H1 (cell line): ENCODE measurements at regions of chrX and their contacts with region 1.

Region 1: GRCh38 chrX:44951572-44952067 is 78.6 kb downstream of the KDM6A start:
- DNase-seq: no peak
- H3K4me3 ChIP-seq: peak overlapping the region; percentile 42 to 83 (median 54)
- H3K27ac ChIP-seq: peak overlapping the region; percentile 89
- H3K4me1 ChIP-seq: peaks cover 0 to 3% (median 2%) of the 10 kb centered on the region in 4 experiments; a peak in 1 of 7 replicates
- H3K27me3 ChIP-seq: no peaks in the 10 kb centered on the region
- CTCF ChIP-seq: no peak
- EP300 ChIP-seq: no peak
- POLR2A ChIP-seq: peak; percentile 33 to 63
- RAD21 ChIP-seq: no peak

Region 2: GRCh38 chrX:44843318-44843702 is 108.3 kb before region 1 on chrX:
- CTCF ChIA-PET with region 1: no interaction called
- POLR2A ChIA-PET with region 1: no interaction called
- DNase-seq: no peak
- H3K4me3 ChIP-seq: no peak overlapping the region
- H3K27ac ChIP-seq: no peak overlapping the region
- H3K4me1 ChIP-seq: no peaks in the 10 kb centered on the region
- H3K27me3 ChIP-seq: no peaks in the 10 kb centered on the region
- CTCF ChIP-seq: no peak
- EP300 ChIP-seq: no peak
- POLR2A ChIP-seq: no peak
- RAD21 ChIP-seq: no peak

Region 3: GRCh38 chrX:44873415-44874276 is 78.0 kb before region 1 on chrX:
- CTCF ChIA-PET with region 1: no interaction called
- POLR2A ChIA-PET with region 1: interaction called, 11 read pairs
- DNase-seq: peak in 1 of 2 experiments; percentile 46
- H3K4me3 ChIP-seq: peak overlapping the region; percentile 76 to 94 (median 83)
- H3K27ac ChIP-seq: peak overlapping the region; percentile 77; the same call in 1 of the 2 replicates
- H3K4me1 ChIP-seq: peaks cover 0 to 3% (median 1%) of the 10 kb centered on the region in 4 experiments; a peak in 2 of 7 replicates
- H3K27me3 ChIP-seq: no peaks in the 10 kb centered on the region
- CTCF ChIP-seq: no peak
- EP300 ChIP-seq: no peak
- POLR2A ChIP-seq: no peak
- RAD21 ChIP-seq: no peak

Region 4: DNA sequence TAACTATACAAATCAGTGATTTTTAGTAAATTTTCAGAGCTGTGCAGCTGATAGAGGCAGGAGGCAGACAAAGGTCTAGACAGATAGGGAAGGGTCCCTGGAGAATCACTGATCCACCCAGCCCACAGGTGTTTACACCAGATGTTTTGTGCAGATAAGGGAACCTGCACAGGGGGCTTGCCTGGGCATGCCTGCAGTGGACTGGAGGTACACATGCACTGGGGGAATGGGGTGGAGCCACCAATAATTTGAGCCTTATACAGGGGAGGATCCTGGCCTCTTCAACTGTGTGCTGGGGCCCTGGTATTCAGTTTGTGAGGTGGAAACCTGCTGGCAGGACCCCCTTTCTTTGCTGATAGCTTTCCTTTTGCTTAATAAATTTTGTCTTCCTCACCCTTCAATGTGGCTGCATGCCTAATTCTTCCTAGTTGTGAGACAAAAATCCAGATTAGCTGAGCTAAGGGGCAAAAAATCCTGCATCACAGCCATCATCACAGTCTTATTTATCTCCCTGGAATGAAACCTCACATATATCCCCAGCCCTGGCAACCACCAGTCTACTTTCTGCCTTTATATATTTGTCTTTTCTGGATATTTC is 24.1 kb after region 1 on chrX:
- CTCF ChIA-PET with region 1: no interaction called
- POLR2A ChIA-PET with region 1: no interaction called
- DNase-seq: no peak
- H3K4me3 ChIP-seq: no peak overlapping the region
- H3K27ac ChIP-seq: no peak overlapping the region; the same call in 1 of the 2 replicates
- H3K4me1 ChIP-seq: no peaks in the 10 kb centered on the region
- H3K27me3 ChIP-seq: no peaks in the 10 kb centered on the region
- CTCF ChIP-seq: no peak
- EP300 ChIP-seq: no peak
- POLR2A ChIP-seq: no peak
- RAD21 ChIP-seq: no peak

Region 5: DNA sequence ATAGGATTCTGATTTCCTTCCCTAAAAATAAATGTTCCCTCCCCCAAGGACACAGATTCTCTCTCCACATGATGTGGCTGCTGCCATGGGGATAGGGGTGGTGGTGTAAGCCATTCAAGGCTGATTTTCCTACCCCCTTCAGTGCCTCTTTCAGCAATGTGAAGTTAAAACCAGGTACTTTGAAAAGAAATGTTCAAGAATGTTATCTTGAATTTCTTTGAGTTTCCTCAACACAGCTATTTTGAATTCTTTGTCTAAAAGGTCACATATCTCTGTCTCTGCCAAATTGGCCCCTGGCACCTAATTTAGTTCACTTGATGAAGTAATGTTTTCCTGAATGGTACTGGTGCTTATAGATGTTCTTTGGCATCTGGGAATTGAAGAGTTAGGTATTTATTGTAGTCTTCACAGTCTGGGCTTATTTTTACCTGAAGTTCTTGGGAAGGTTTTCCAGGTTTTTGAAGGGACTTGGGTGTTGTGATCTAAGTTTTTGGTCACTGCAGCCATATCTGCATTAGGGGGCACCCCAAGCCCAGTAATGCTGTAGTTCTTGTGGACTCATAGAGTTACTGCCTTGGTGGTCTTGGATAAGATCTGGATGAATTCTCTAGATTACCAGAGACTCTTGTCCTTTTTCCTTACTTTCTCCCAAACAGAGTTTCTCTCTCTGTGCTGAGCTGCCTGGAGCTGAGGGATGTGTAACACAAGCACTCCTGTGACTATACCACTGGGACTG is 256.7 kb after region 1 on chrX:
- CTCF ChIA-PET with region 1: no interaction called
- POLR2A ChIA-PET with region 1: no interaction called
- DNase-seq: no peak
- H3K4me3 ChIP-seq: no peak overlapping the region
- H3K27ac ChIP-seq: no peak overlapping the region
- H3K4me1 ChIP-seq: no peaks in the 10 kb centered on the region
- H3K27me3 ChIP-seq: no peaks in the 10 kb centered on the region
- CTCF ChIP-seq: peak in 2 of 3 experiments; percentile 3 to 16; a peak in 1 of 4 replicates
- EP300 ChIP-seq: no peak
- POLR2A ChIP-seq: no peak
- RAD21 ChIP-seq: peak; percentile 49 to 58

Region 6: GRCh38 chrX:45274576-45274975 is 323.0 kb after region 1 on chrX:
- CTCF ChIA-PET with region 1: no interaction called
- POLR2A ChIA-PET with region 1: no interaction called
- DNase-seq: no peak
- H3K4me3 ChIP-seq: no peak overlapping the region
- H3K27ac ChIP-seq: no peak overlapping the region
- H3K4me1 ChIP-seq: no peaks in the 10 kb centered on the region
- H3K27me3 ChIP-seq: no peaks in the 10 kb centered on the region
- CTCF ChIP-seq: no peak
- EP300 ChIP-seq: no peak
- POLR2A ChIP-seq: no peak
- RAD21 ChIP-seq: no peak